CD4-positive, alpha-beta T cell (primary cell): ENCODE measurements at regions of chr15 and their contacts with region 1.

Region 1: GRCh38 chr15:51982013-51982769 is 10.6 kb upstream of the LEO1 start:
- DNase-seq: peak in 11 of 14 experiments; percentile 1 to 83 (median 36)
- ATAC-seq: peak; percentile 97
- H3K4me3 ChIP-seq: peak overlapping the region; percentile 34
- H3K4me3 Mint-ChIP-seq: peak overlapping the region; percentile 84
- H3K27ac ChIP-seq: no peak overlapping the region
- H3K27ac Mint-ChIP-seq: peak overlapping the region; percentile 74
- H3K4me1 ChIP-seq: peaks cover 8% of the 10 kb centered on the region
- H3K4me1 Mint-ChIP-seq: peaks cover 11% of the 10 kb centered on the region
- H3K27me3 ChIP-seq: no peaks in the 10 kb centered on the region
- H3K27me3 Mint-ChIP-seq: no peaks in the 10 kb centered on the region
- CTCF ChIP-seq: peak; percentile 75

Region 2: DNA sequence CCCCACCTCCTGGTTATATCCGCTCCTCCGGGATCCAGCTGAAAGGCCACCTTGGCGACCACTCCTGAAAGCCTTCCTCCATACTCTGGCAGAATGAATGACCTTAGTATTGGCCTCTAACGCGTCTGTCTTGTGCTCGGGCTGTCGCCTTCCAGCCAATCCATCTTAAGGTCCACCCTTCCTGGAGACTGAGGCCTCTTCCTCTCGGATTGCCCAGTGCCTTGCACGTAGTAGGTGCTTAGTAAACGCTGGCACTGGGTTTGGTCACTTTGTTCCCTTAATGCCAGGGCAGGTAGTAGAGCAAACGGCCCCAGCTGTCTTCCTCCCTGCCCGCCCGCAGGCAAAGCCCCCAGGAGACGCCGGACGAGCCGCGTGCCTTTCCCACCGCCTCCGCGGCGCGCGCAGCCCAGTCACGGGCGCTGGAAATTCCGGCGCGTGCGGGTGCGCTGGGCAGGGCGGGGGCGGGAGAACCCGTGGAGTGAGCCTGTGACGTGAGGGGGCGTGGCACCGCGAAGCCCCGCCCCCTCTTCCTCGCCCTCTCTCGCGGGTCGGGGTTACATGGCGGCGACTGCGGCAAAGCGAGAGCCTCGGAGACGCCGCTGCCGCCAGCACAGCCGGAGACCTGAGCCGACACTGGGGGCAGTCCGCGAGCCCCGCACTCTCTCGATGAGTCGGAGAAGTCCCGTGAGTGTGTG is 36.6 kb after region 1 on chr15 and contains the start of gene MAPK6:
- CTCF ChIA-PET with region 1: no interaction called
- POLR2A ChIA-PET with region 1: interaction called, 3 read pairs
- intact Hi-C with region 1: loop called (anchors 5 kb)
- DNase-seq: peak; percentile 87 to 99 (median 92)
- ATAC-seq: peak; percentile 88
- H3K4me3 ChIP-seq: peak within 1 kb of the TSS; percentile 71
- H3K4me3 Mint-ChIP-seq: peak within 1 kb of the TSS; percentile 99
- H3K27ac ChIP-seq: peak within 1 kb of the TSS; percentile 79 to 87
- H3K27ac Mint-ChIP-seq: peak within 1 kb of the TSS; percentile 97
- H3K4me1 ChIP-seq: peaks cover 18% of the 10 kb centered on the region
- H3K4me1 Mint-ChIP-seq: peaks cover 34% of the 10 kb centered on the region
- H3K27me3 ChIP-seq: no peaks in the 10 kb centered on the region
- H3K27me3 Mint-ChIP-seq: no peaks in the 10 kb centered on the region
- CTCF ChIP-seq: no peak
- total RNA-seq, gene MAPK6: 48.5 to 49.8 TPM

Region 3: GRCh38 chr15:52078876-52079700 is 96.9 kb after region 1 on chr15:
- CTCF ChIA-PET with region 1: interaction called, 9 read pairs
- POLR2A ChIA-PET with region 1: interaction called, 5 read pairs
- intact Hi-C with region 1: loop called (anchors 1 kb)
- DNase-seq: peak; percentile 75 to 93 (median 82)
- ATAC-seq: peak; percentile 91
- H3K4me3 ChIP-seq: no peak overlapping the region
- H3K4me3 Mint-ChIP-seq: no peak overlapping the region
- H3K27ac ChIP-seq: no peak overlapping the region
- H3K27ac Mint-ChIP-seq: no peak overlapping the region
- H3K4me1 ChIP-seq: peaks cover 11% of the 10 kb centered on the region
- H3K4me1 Mint-ChIP-seq: peaks cover 12% of the 10 kb centered on the region
- H3K27me3 ChIP-seq: no peaks in the 10 kb centered on the region
- H3K27me3 Mint-ChIP-seq: no peaks in the 10 kb centered on the region
- CTCF ChIP-seq: peak; percentile 83

Region 4: GRCh38 chr15:52208306-52208946 is 226.2 kb after region 1 on chr15:
- CTCF ChIA-PET with region 1: no interaction called
- POLR2A ChIA-PET with region 1: no interaction called
- intact Hi-C with region 1: loop called in 1 of 2 experiments (anchors 5 kb)
- DNase-seq: peak; percentile 58 to 82 (median 72)
- ATAC-seq: peak; percentile 100
- H3K4me3 ChIP-seq: no peak overlapping the region
- H3K4me3 Mint-ChIP-seq: no peak overlapping the region
- H3K27ac ChIP-seq: no peak overlapping the region
- H3K27ac Mint-ChIP-seq: no peak overlapping the region
- H3K4me1 ChIP-seq: no peaks in the 10 kb centered on the region
- H3K4me1 Mint-ChIP-seq: no peaks in the 10 kb centered on the region
- H3K27me3 ChIP-seq: no peaks in the 10 kb centered on the region
- H3K27me3 Mint-ChIP-seq: no peaks in the 10 kb centered on the region
- CTCF ChIP-seq: peak; percentile 84